MCF 10A (cell line): ENCODE measurements at regions of chr2 and their contacts with region 1.

Region 1: GRCh38 chr2:178914259-178914849 is 107.1 kb upstream of the TTN start:
- DNase-seq: peak; percentile 85
- H3K4me3 Mint-ChIP-seq: no peak overlapping the region
- H3K27ac Mint-ChIP-seq: no peak overlapping the region
- H3K4me1 Mint-ChIP-seq: peaks cover 16% of the 10 kb centered on the region
- H3K27me3 Mint-ChIP-seq: no peaks in the 10 kb centered on the region
- CTCF ChIP-seq: peak; percentile 70

Region 2: DNA sequence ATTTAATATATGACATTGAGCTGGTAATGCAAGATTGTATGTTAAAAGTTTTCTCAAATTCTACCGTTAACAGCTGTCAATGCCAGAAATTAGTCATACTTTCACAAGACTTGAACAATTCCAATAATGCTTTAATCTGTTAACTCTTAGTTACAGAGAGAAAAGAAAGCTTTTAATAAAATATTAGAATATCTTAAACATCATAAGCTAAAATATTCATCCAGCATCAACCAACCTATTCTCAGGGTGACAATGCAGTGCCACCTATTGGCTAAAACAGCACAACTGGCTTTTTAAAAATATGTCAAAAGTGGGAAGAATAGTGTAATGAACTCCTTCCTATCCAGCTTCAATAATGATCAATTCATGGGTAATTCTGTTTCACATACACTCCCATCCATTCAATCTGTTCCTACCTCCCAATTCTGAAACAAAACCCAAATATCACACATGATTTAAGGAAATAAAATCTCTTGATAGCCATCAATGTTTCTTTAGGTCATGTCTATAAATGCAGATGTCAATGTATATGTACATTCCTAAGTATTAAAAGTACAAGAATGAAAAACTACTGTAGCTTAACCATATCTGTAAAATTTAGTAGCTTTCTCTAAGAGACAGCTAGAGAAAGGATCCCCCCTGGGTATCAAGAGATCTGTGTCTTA is 215.4 kb after region 1 on chr2:
- CTCF ChIA-PET with region 1: interaction called, 16 read pairs
- POLR2A ChIA-PET with region 1: no interaction called
- intact Hi-C with region 1: no loop called
- DNase-seq: peak; percentile 29
- H3K4me3 Mint-ChIP-seq: no peak overlapping the region
- H3K27ac Mint-ChIP-seq: no peak overlapping the region
- H3K4me1 Mint-ChIP-seq: no peaks in the 10 kb centered on the region
- H3K27me3 Mint-ChIP-seq: no peaks in the 10 kb centered on the region
- CTCF ChIP-seq: peak; percentile 43

Region 3: DNA sequence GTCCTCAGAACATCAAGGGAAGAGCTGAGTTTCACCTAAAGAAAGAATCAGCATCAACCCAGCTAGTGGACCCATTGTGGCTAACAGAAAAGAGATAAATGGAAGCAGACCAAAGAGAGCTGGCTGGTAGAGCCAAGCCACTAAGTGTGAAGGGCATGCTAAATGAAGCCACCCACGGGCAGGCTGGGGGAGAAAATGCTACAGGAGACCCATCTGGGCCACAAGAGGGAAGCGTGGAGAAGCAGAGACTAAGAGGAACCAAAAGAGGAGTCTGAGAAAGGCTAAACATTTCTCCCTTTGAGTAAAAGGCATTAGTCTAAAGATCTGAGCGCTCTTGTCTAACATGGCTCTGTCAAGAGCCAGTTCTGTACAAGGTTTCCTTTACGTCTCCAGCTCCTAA is 1077.0 kb after region 1 on chr2:
- CTCF ChIA-PET with region 1: no interaction called
- POLR2A ChIA-PET with region 1: no interaction called
- intact Hi-C with region 1: no loop called
- DNase-seq: peak; percentile 18
- H3K4me3 Mint-ChIP-seq: no peak overlapping the region
- H3K27ac Mint-ChIP-seq: no peak overlapping the region
- H3K4me1 Mint-ChIP-seq: peaks cover 25% of the 10 kb centered on the region
- H3K27me3 Mint-ChIP-seq: no peaks in the 10 kb centered on the region
- CTCF ChIP-seq: no peak

Region 4: GRCh38 chr2:180063494-180064092 is 1149.2 kb after region 1 on chr2:
- CTCF ChIA-PET with region 1: no interaction called
- POLR2A ChIA-PET with region 1: no interaction called
- intact Hi-C with region 1: no loop called
- DNase-seq: peak; percentile 4
- H3K4me3 Mint-ChIP-seq: no peak overlapping the region
- H3K27ac Mint-ChIP-seq: no peak overlapping the region
- H3K4me1 Mint-ChIP-seq: no peaks in the 10 kb centered on the region
- H3K27me3 Mint-ChIP-seq: no peaks in the 10 kb centered on the region
- CTCF ChIP-seq: no peak